SK-MEL-5 (cell line): ENCODE measurements at regions of chr16 and their contacts with region 1.

Region 1: DNA sequence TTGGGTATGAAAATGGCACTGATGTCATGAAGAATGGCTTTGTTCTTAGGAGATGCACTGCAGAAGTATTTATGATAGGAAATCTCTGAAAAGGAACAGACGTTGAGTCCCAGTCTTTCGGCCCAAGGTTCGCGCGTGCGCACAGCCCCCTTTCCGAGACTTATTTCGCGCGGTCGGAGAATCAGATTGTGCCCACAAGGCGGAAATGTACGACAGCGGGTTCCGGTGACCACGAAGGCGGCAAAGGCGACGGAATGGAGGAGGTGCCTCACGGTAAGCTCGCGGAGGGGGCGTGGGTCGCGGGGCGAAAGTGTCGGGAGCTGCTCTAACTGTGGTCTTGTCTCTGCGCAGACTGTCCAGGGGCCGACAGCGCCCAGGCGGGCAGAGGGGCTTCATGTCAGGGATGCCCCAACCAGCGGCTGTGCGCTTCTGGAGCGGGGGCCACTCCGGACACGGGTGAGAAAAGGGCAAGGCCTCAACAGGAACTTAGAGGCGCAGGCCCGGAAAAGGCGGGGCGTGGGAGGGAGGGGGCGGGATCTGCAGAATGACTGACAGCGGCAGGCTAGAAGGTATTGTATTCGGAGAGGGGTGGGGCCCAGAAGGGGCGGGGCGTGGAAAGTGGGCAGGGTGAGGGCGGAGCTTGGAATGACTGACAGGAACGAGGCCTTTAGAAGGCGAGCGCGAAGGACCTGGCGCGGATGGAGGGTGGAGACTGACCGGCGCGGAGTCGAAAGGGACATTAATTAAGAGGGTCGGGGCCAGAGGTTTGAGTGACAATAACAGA is at the start of gene NUBP1:
- DNase-seq: peak; percentile 97
- total RNA-seq, gene NUBP1: 27.7 and 34.6 TPM in 2 replicates

Region 2: GRCh38 chr16:10579965-10580882 is 163.6 kb before region 1 on chr16 and contains the start of gene EMP2:
- in situ Hi-C with region 1: loop called (anchors 25 kb)
- DNase-seq: peak; percentile 71
- total RNA-seq, gene EMP2: 59.9 and 61.6 TPM in 2 replicates

Region 3: DNA sequence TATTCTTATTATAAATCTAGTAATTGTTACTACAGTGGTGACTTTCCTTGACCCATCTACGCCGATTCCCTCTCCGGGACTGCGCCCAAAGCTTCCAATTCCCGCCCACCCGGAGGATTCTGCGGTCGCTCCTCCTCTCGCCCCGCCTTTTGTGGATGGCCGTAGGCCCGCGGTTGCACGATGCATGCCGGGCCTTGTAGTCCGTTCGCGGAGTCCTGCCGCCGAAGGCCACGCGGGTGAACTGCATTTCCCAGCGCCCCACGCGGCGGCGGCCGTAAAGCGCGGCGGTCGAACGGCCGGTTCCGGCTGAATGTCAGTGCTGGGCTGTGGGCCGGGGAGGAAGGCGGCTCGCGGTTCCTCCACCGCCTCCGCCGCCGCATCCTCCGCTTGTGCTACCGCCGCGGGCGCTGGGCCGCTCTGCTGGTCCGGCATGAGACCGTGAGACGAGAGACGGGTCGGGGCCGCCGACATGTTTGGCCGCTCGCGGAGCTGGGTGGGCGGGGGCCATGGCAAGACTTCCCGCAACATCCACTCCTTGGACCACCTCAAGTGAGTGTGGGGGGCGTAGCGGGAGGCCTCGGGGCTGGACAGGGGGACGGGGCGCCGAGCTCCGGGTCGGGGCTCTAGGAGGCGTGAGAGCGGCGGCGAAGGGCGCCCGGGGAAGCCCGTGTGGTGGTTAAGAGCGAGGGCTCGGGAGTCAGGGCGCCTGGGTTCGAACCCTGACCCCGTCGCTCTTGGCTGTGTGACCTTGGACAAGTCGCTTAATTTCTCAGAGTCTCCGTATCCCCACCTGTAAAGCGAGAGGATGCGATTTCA is 200.7 kb after region 1 on chr16 and contains the start of gene CLEC16A:
- in situ Hi-C with region 1: loop called (anchors 10 kb)
- DNase-seq: peak; percentile 94
- total RNA-seq, gene CLEC16A: 8.0 TPM in 2 replicates